HEK293T (cell line): ENCODE measurements at regions of chr11 and their contacts with region 1.

Region 1: DNA sequence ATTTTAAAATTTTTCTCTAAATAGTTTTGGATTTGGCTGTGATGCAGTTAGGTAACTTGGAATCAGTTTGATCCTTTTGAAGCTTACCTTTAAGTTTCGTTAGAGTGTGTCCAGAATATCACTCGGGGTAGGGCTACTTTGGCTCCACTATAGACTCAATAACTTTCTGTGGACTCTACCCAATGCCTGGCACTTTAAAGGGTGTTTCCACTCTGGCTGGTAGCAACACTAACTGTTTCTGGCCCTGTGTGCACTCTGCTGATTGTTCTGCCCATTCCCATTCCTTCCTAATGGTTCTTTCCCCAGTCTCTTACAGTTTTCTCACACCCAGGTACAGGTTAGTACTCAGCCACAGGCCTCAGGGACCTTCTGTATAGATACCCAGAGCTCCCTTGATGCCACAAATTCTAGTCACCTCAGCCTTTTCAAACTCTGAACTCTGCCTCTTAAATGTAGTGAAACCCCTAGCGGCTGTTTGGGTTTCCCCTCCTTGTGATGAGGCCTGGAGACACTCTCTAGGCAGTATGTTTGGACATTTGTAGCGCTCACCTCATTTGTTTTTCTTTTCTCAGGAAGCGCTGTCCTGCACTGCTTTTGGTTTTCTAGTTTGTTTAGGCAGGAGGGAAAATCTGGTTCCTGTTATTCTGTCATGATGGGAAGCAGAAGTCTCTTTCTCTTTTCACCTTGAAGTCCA is 16.8 kb downstream of the CUL5 start:
- DNase-seq: no peak

Region 2: GRCh38 chr11:107898270-107898669 is 127.3 kb before region 1 on chr11:
- CTCF ChIA-PET with region 1: no interaction called
- POLR2A ChIA-PET with region 1: no interaction called
- DNase-seq: peak; percentile 45

Region 3: DNA sequence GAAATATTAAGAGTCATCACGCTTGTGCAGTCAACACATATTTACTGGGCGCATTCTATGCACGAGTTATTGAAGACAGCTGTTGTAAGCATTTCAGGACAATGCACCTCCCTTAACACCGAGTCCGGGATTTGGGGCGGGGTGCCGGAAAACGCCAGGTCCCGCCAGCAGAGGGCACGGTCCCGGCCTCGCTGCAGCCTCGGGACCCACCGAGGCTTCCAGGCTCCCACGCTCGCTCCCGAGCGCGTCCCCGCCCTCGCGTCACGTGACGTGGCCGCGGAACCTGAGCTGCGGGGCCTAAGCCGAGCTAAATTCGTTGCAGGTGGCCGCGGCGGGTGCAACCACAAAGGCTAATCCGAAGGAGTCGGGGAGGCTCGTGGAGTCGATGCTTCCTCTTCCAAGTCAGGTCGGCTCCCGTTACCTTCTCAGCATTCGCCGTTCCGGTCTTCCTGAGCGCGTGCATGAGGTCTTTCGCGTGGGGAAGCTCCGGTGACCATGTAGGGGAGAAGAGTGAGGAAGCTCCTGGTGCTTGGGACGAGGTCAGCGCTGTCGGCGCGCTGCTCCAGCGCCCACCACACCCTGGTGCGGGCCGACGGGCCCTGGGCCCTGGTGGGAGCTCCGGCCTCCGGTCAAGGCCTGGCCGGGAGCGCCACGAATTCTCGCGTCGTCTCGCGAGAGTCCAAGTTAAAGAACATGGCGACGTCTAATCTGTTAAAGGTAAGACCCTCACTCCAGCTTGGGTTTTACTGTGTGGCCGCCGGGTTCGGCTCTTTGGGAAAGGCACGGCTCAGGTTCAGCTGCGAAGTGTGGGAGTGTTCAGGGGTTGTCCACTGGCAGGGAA is 16.7 kb before region 1 on chr11 and contains the start of gene CUL5:
- CTCF ChIA-PET with region 1: interaction called, 7 read pairs
- POLR2A ChIA-PET with region 1: interaction called, 13 read pairs
- DNase-seq: peak; percentile 93

Region 4: DNA sequence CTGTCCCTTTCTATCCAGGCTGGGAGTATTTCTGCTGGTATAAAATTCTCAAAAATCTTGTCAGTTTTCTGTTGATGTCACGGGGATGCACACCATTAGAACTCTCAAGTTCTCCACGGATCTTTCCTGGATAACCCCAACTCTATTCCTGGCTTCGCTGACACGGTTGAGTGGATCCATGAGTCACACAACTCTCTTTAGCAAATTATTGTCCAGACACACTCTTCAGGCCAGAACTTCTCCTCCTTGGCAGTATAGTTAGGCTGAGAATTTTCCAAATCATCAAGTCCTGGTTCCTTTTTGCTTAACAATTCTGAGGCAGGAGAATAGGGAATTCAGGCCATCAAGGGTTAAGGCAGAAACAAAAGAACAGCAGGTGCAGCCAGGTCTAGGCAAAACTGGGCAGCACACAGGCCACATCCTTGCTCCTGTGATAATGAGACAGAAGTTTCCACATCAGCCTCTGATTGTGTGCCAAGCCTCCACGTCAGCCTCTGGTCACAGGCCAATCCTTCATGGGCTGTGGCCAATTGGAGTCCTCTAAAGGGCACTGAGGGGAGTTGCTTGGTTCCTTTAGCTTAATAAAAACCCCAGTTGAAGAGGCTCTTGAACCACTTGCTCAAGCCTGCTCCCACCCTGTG is 90.1 kb after region 1 on chr11:
- CTCF ChIA-PET with region 1: no interaction called
- POLR2A ChIA-PET with region 1: no interaction called
- DNase-seq: no peak